Activated naive CD4-positive, alpha-beta T cell treated with anti-CD3 and anti-CD28 coated beads for 36 hours (primary cell): ENCODE measurements at regions of chrX and their contacts with region 1.

Region 1: GRCh38 chrX:126770194-126770593 is 49.3 kb upstream of the PRR32 start:
- DNase-seq: no peak
- H3K4me3 Mint-ChIP-seq: no peak overlapping the region
- H3K27ac Mint-ChIP-seq: no peak overlapping the region
- H3K4me1 Mint-ChIP-seq: no peaks in the 10 kb centered on the region
- H3K27me3 Mint-ChIP-seq: no peaks in the 10 kb centered on the region

Region 2: DNA sequence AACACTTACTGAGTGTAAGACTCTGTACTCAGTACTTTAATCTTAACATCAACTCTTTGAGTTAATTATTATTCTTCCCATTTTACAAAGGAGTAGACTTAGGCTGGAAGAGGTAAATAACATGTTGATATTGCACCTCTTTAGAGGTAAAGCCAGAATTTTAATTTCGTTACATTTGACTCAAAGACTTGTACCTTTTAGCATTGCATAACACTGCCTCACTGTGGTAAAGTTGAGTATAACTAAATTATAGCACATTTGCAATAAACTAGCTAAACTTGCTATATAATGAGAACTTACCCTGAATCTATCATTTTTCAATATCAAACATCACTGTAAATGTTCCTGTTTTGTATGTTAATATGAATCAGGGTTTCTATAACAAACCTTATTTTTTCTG is 267.9 kb after region 1 on chrX:
- CTCF ChIA-PET with region 1: no interaction called
- intact Hi-C with region 1: loop called (anchors 5 kb)
- DNase-seq: no peak
- H3K4me3 Mint-ChIP-seq: no peak overlapping the region
- H3K27ac Mint-ChIP-seq: no peak overlapping the region
- H3K4me1 Mint-ChIP-seq: no peaks in the 10 kb centered on the region
- H3K27me3 Mint-ChIP-seq: no peaks in the 10 kb centered on the region